Vagina (tissue), 2 donors: ENCODE measurements at regions of chr1 and their contacts with region 1.

Region 1: DNA sequence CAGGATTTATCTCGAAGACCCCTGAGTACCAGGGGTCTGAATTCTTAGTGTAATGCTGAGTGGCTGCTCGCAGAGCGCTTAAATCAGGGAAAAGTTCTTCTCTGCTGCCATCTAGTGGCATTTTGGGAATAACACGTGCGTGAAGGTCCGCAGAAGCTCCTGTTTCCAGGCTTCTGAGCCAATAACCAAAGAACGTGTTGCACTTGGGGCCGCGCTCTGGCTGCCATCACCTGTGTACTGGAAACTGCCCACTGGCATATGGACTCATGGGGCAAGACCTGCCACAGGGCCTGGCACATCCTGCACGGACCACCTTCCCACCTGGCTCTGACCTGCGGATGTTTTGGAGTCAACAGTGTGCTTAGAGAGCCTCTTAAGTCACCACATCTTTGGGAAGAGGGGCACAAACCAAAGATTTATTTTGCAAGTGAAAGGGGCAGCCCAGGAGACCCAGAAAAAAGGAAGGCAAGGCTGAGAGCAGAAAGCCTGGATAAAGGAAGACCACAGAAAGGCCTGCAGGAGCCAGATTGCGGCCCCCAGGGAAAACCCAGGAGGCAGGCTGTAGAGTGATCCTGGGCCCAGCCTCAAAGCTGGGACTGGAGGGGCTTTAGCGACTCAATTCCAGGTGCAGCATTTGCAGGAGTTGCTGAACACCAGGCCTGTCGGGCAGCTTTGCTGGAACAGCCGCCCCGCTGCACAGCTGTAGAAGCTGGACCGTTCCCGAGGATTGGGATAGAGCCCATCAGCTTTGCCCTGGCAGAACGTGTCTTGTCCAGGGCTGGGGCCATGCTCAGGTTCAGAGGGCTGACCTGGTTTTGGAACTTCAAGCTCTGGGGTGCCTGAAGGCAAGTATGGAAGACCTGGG is 13.0 kb downstream of the CHIT1 start:
- DNase-seq: no peak
- H3K4me3 ChIP-seq: no peak overlapping the region
- H3K27ac ChIP-seq: no peak overlapping the region
- H3K4me1 ChIP-seq: no peaks in the 10 kb centered on the region
- H3K27me3 ChIP-seq: no peaks in the 10 kb centered on the region
- CTCF ChIP-seq: peak; percentile 71 to 75 (median 72)
- POLR2A ChIP-seq: no peak

Region 2: DNA sequence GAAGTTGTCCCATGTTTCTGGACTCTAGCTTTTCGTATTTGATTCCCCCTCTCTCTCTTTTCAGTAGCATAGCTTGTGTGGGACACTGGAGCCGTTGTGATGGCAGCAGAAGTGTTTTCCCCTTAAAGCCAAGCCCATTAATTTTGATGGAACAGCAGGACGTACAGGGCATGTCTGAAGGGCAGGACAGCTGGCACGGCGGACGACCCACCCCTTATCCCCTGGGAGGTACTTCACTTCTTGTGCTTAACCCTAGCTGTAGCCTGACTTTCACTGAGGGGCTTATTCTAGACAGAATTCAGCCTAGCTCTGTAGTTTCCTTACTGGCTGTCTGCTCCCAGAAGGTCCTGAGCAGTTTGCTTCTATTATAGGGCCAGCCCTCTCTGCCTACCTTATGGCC is 198.8 kb before region 1 on chr1:
- intact Hi-C with region 1: no loop called
- DNase-seq: no peak
- H3K4me3 ChIP-seq: no peak overlapping the region
- H3K27ac ChIP-seq: no peak overlapping the region
- H3K4me1 ChIP-seq: no peaks in the 10 kb centered on the region
- H3K27me3 ChIP-seq: no peaks in the 10 kb centered on the region
- CTCF ChIP-seq: no peak
- POLR2A ChIP-seq: no peak

Region 3: GRCh38 chr1:203039609-203040512 is 176.6 kb before region 1 on chr1:
- intact Hi-C with region 1: loop called (anchors 5 kb)
- DNase-seq: no peak
- H3K4me3 ChIP-seq: no peak overlapping the region
- H3K27ac ChIP-seq: no peak overlapping the region
- H3K4me1 ChIP-seq: peaks cover 11% of the 10 kb centered on the region
- H3K27me3 ChIP-seq: no peaks in the 10 kb centered on the region
- CTCF ChIP-seq: no peak
- POLR2A ChIP-seq: no peak

Region 4: DNA sequence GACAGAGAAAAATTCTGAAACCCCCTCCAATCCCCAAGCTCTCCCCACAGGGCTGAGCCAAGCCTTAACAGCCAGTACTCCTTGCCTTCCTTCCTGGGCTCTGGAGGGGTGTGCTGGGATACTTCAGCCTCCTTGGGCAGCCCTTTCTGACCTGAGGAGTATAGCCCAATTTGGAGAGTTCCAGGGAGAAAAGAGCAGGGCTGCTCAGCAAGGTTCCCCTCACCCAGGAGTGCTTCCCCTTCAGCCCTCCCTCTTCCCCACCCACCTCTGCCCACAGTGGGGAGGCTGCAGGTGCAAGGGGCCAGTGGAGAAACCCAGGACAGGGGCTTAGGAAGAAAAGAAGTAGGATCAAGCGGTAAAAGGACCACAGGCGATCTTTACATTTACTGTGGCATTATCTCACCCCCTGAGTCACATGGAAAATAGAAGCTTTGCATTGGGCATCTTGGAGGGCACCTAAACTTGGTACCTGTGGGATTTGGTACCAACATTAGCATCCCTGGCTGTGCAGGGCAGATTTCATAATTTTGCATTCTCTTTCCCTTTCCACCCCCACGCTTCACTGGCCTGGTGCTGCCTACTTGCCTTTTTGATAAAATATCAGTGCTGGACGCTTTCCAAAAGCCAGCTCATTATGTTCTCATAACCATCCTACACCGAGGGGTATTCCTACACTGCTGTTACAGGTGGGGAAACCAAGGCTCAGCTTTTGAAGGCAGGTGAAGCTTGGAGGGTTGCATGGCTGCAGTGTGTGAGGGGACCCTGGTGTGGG is 91.8 kb before region 1 on chr1:
- intact Hi-C with region 1: loop called (anchors 5 kb)
- DNase-seq: no peak
- H3K4me3 ChIP-seq: no peak overlapping the region
- H3K27ac ChIP-seq: no peak overlapping the region
- H3K4me1 ChIP-seq: peaks cover 28% of the 10 kb centered on the region
- H3K27me3 ChIP-seq: no peaks in the 10 kb centered on the region
- CTCF ChIP-seq: no peak
- POLR2A ChIP-seq: no peak